Colonic mucosa (tissue), 4 donors: ENCODE measurements at regions of chr2 and their contacts with region 1.

Region 1: DNA sequence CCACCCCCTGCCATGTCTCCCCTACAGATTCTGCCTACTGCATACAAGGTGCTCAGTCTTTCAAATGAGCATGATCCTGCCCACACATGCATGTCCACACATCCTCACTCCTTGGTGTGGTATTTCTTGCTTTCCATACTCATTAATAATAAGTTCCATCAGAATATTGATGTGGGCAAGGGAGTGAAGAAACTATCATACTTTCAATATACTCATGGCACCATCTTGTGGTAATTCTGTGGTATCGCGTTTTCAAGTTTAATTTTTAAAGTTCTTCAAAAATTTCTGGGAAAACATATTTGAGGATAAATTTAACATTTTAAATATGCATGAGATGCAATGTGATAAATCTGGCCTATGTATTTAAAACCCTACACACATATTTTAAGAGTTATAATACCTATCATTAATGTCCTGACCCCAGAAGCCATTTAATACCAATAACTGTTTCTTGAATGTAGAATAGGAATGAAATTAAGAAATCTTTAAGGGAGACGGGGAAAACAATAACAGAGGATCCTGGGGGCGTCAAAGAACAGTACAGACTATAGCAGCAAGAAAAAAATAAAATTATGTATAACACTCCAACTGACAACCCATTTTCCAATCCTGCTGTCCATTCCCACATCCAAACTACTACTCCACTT is 110.1 kb downstream of the ZNF385B start:
- DNase-seq: no peak
- H3K4me3 ChIP-seq: no peak overlapping the region
- H3K27ac ChIP-seq: no peak overlapping the region
- H3K4me1 ChIP-seq: no peaks in the 10 kb centered on the region
- H3K27me3 ChIP-seq: no peaks in the 10 kb centered on the region
- CTCF ChIP-seq: peak; percentile 31

Region 2: GRCh38 chr2:179218848-179219594 is 532.3 kb before region 1 on chr2:
- intact Hi-C with region 1: loop called (anchors 5 kb)
- DNase-seq: peak; percentile 62
- H3K4me3 ChIP-seq: no peak overlapping the region
- H3K27ac ChIP-seq: no peak overlapping the region
- H3K4me1 ChIP-seq: no peaks in the 10 kb centered on the region
- H3K27me3 ChIP-seq: no peaks in the 10 kb centered on the region
- CTCF ChIP-seq: peak; percentile 88

Region 3: DNA sequence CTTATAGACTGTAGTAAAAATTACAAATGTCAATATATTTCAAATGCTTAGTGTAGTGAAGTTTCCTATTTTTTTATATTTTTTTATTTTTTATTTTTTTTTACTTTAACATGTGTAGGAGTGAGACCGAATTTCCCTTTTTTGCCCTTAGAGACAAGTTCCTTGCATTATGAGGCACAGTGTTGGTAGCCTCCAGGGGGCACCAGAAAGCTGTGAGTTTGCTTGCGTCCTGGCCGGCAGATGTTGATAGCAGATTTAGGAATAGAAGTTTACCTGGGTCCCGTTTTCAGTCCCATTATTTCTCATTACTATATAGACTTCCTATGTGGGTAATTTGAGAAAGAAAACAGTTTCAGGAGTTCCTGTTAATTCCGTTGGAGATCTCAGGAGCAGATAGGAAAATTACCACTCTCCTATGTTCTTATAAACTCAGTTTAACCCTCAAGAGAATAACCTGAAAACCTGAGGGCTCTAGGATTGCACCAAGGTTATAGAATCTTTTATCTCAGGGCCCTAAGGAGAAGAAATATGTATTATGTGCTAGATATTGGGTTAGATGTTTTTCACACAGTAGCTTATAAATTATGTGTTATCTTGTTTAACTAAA is 329.1 kb before region 1 on chr2:
- intact Hi-C with region 1: loop called (anchors 2 kb)
- DNase-seq: peak; percentile 75
- H3K4me3 ChIP-seq: no peak overlapping the region
- H3K27ac ChIP-seq: no peak overlapping the region
- H3K4me1 ChIP-seq: no peaks in the 10 kb centered on the region
- H3K27me3 ChIP-seq: no peaks in the 10 kb centered on the region
- CTCF ChIP-seq: peak; percentile 80